Activated B cell treated with CpG ODN at 0.5 μM for 24 hours (primary cell): ENCODE measurements at regions of chr15 and their contacts with region 1.

Region 1: GRCh38 chr15:99507504-99508310 is 58.1 kb upstream of the MEF2A start:
- DNase-seq: no peak
- ATAC-seq: no peak
- H3K4me3 Mint-ChIP-seq: peak overlapping the region; percentile 50
- H3K27ac Mint-ChIP-seq: peak overlapping the region; percentile 97
- H3K4me1 Mint-ChIP-seq: peaks cover 96% of the 10 kb centered on the region
- H3K27me3 Mint-ChIP-seq: no peaks in the 10 kb centered on the region
- CTCF ChIP-seq: no peak

Region 2: GRCh38 chr15:99282121-99282520 is 225.6 kb before region 1 on chr15:
- CTCF ChIA-PET with region 1: interaction called, 5 read pairs
- POLR2A ChIA-PET with region 1: no interaction called
- intact Hi-C with region 1: loop called (anchors 10 kb)
- DNase-seq: no peak
- ATAC-seq: no peak
- H3K4me3 Mint-ChIP-seq: no peak overlapping the region
- H3K27ac Mint-ChIP-seq: no peak overlapping the region
- H3K4me1 Mint-ChIP-seq: peaks cover 11% of the 10 kb centered on the region
- H3K27me3 Mint-ChIP-seq: no peaks in the 10 kb centered on the region
- CTCF ChIP-seq: no peak

Region 3: GRCh38 chr15:99433034-99433756 is 74.5 kb before region 1 on chr15:
- CTCF ChIA-PET with region 1: interaction called, 7 read pairs
- POLR2A ChIA-PET with region 1: interaction called, 12 read pairs
- intact Hi-C with region 1: no loop called
- DNase-seq: peak; percentile 30
- ATAC-seq: peak; percentile 83
- H3K4me3 Mint-ChIP-seq: peak overlapping the region; percentile 28
- H3K27ac Mint-ChIP-seq: peak overlapping the region; percentile 70
- H3K4me1 Mint-ChIP-seq: peaks cover 57% of the 10 kb centered on the region
- H3K27me3 Mint-ChIP-seq: no peaks in the 10 kb centered on the region
- CTCF ChIP-seq: no peak

Region 4: GRCh38 chr15:99476413-99477222 is 31.1 kb before region 1 on chr15:
- CTCF ChIA-PET with region 1: interaction called, 5 read pairs
- POLR2A ChIA-PET with region 1: interaction called, 11 read pairs
- intact Hi-C with region 1: loop called (anchors 1 kb)
- DNase-seq: peak; percentile 60
- ATAC-seq: peak; percentile 84
- H3K4me3 Mint-ChIP-seq: peak overlapping the region; percentile 11
- H3K27ac Mint-ChIP-seq: peak overlapping the region; percentile 31
- H3K4me1 Mint-ChIP-seq: peaks cover 52% of the 10 kb centered on the region
- H3K27me3 Mint-ChIP-seq: no peaks in the 10 kb centered on the region
- CTCF ChIP-seq: no peak

Region 5: DNA sequence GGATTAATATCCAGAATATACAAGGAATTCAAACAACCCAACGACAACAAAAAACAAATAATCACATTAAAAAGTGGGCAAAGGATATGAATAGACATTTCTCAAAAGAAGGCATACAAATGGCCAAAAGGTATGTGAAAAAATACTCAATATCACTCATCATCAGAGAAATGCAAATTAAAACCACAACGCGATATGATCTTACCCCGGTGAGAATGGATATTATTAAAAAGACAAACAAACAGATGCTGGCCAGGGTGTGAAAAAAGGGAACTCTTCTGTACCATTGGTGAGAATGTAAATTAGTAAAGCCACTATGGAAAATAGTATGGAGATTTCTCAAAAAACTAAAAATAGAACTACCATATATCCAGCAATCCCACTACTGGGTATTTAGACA is 14.6 kb after region 1 on chr15:
- CTCF ChIA-PET with region 1: no interaction called
- POLR2A ChIA-PET with region 1: interaction called, 12 read pairs
- intact Hi-C with region 1: loop called (anchors 2 kb)
- DNase-seq: no peak
- ATAC-seq: no peak
- H3K4me3 Mint-ChIP-seq: no peak overlapping the region
- H3K27ac Mint-ChIP-seq: peak overlapping the region; percentile 0
- H3K4me1 Mint-ChIP-seq: peaks cover 25% of the 10 kb centered on the region
- H3K27me3 Mint-ChIP-seq: no peaks in the 10 kb centered on the region
- CTCF ChIP-seq: no peak

Region 6: DNA sequence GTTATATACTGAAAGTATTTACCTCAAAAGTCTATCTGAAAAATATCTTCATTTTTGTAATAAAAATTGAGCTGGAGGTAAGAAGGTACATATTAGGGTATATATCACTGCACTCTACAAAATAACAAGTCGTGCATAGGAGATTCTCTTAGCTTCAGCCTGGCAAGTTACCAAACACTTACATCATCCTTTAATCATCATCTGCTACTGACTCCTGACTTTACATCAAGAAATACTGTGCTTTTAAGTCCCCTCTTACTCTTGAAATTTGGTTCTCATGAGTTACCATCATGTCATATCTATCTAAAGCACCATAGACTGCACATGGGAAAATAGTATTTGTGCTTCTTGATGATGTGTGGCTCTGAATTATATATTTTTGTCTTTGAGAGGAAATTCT is 174.7 kb after region 1 on chr15:
- CTCF ChIA-PET with region 1: no interaction called
- POLR2A ChIA-PET with region 1: interaction called, 3 read pairs
- intact Hi-C with region 1: loop called (anchors 5 kb)
- DNase-seq: no peak
- ATAC-seq: no peak
- H3K4me3 Mint-ChIP-seq: no peak overlapping the region
- H3K27ac Mint-ChIP-seq: peak overlapping the region; percentile 70
- H3K4me1 Mint-ChIP-seq: peaks cover 45% of the 10 kb centered on the region
- H3K27me3 Mint-ChIP-seq: no peaks in the 10 kb centered on the region
- CTCF ChIP-seq: no peak